Activated CD4-positive, alpha-beta T cell treated with anti-CD3 and anti-CD28 coated beads for 36 hours (primary cell): ENCODE measurements at regions of chr6 and their contacts with region 1.

Region 1: DNA sequence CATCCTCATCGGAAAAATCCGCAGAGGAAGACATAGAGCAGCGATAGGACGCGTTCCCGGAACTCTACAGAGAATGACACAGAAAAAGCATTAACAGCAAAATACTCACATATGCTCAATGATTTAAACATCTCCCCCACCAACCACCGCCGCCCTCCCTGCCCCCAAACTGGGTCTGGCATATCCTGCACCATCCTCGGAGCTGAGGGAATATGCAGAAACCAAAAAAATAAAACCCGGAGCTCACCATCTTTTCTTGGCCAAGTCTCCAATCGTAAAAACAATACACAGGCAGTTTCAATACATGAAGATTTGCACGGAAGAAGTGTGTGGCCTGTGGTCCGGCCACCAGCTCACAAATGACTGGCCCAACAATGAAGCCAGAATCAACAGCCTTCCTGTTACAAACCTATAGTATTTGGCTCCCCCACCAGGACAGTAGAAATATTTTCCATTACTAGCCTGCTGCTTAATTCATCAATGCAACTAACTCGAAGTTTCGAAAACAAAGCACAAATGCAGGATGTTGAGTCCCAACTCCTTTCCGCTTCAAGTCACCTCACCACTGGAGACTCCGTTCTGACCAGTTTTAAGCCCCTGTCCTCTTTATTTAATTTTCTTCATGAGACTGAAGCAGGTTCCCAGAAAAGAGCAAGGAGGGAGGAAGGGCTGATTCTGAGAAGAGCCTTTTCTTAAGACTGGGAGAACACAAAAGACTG is 103.2 kb upstream of the BEND6 start:
- DNase-seq: peak; percentile 61
- ATAC-seq: peak; percentile 87
- H3K4me3 Mint-ChIP-seq: peak overlapping the region; percentile 55
- H3K27ac Mint-ChIP-seq: peak overlapping the region; percentile 43
- H3K4me1 Mint-ChIP-seq: peaks cover 19% of the 10 kb centered on the region
- H3K27me3 Mint-ChIP-seq: peaks cover 41% of the 10 kb centered on the region

Region 2: GRCh38 chr6:56359201-56359899 is 492.4 kb before region 1 on chr6:
- CTCF ChIA-PET with region 1: interaction called, 3 read pairs
- POLR2A ChIA-PET with region 1: no interaction called
- intact Hi-C with region 1: loop called in 1 of 2 experiments (anchors 5 kb)
- DNase-seq: peak; percentile 75
- ATAC-seq: no peak
- H3K4me3 Mint-ChIP-seq: no peak overlapping the region
- H3K27ac Mint-ChIP-seq: no peak overlapping the region
- H3K4me1 Mint-ChIP-seq: no peaks in the 10 kb centered on the region
- H3K27me3 Mint-ChIP-seq: peaks cover 1% of the 10 kb centered on the region

Region 3: GRCh38 chr6:56637640-56638039 is 214.1 kb before region 1 on chr6:
- CTCF ChIA-PET with region 1: no interaction called
- POLR2A ChIA-PET with region 1: no interaction called
- intact Hi-C with region 1: loop called (anchors 2 kb)
- DNase-seq: no peak
- ATAC-seq: no peak
- H3K4me3 Mint-ChIP-seq: no peak overlapping the region
- H3K27ac Mint-ChIP-seq: no peak overlapping the region
- H3K4me1 Mint-ChIP-seq: no peaks in the 10 kb centered on the region
- H3K27me3 Mint-ChIP-seq: no peaks in the 10 kb centered on the region

Region 4: GRCh38 chr6:56708810-56709597 is 142.7 kb before region 1 on chr6:
- CTCF ChIA-PET with region 1: interaction called, 5 read pairs
- POLR2A ChIA-PET with region 1: no interaction called
- intact Hi-C with region 1: loop called in 1 of 2 experiments (anchors 5 kb)
- DNase-seq: no peak
- ATAC-seq: no peak
- H3K4me3 Mint-ChIP-seq: no peak overlapping the region
- H3K27ac Mint-ChIP-seq: no peak overlapping the region
- H3K4me1 Mint-ChIP-seq: no peaks in the 10 kb centered on the region
- H3K27me3 Mint-ChIP-seq: peaks cover 2% of the 10 kb centered on the region